PC-9 (cell line): ENCODE measurements at regions of chr20 and their contacts with region 1.

Region 1: GRCh38 chr20:38173237-38174156 is 8.4 kb upstream of the TGM2 start:
- DNase-seq: peak; percentile 81 to 91
- H3K4me3 ChIP-seq: no peak overlapping the region
- H3K27ac ChIP-seq: peak overlapping the region; percentile 78
- H3K4me1 ChIP-seq: peaks cover 53% of the 10 kb centered on the region
- H3K27me3 ChIP-seq: no peaks in the 10 kb centered on the region
- CTCF ChIP-seq: peak; percentile 41; the same call in 1 of the 2 replicates

Region 2: GRCh38 chr20:38187512-38187911 is 14.0 kb after region 1 on chr20:
- CTCF ChIA-PET with region 1: interaction called, 4 read pairs
- POLR2A ChIA-PET with region 1: interaction called, 3 read pairs
- intact Hi-C with region 1: loop called (anchors 1 kb)
- DNase-seq: no peak
- H3K4me3 ChIP-seq: no peak overlapping the region
- H3K27ac ChIP-seq: peak overlapping the region; percentile 86
- H3K4me1 ChIP-seq: peaks cover 64% of the 10 kb centered on the region
- H3K27me3 ChIP-seq: no peaks in the 10 kb centered on the region
- CTCF ChIP-seq: no peak

Region 3: DNA sequence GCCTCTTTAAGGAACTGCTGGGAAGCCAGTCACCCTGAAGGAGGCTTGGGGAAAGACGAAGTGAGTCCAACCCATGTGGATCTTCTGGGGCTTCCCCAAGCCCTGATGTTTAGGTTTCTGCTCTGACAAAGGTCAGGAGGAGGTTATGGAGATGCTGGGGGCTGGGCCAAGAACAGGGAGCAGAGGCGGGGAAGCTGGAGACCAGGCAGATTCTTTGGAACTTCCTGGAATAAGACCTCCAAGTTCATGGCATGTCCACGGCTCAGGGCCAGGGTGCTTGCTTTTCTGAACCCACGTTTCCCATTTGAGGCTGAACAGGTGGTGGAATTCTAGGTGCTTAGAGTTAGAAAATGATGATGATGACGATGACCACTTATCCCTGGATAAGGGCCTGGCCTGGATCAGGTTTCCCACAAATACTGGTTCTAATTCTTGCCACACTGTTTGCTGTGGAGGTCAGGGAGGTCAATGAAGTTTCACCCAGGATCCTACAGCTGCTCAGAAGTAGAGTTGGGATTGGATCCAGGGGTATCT is 21.5 kb after region 1 on chr20:
- CTCF ChIA-PET with region 1: interaction called, 3 read pairs
- POLR2A ChIA-PET with region 1: interaction called, 3 read pairs
- intact Hi-C with region 1: loop called (anchors 1 kb)
- DNase-seq: peak in 1 of 2 experiments; percentile 72
- H3K4me3 ChIP-seq: no peak overlapping the region
- H3K27ac ChIP-seq: peak overlapping the region; percentile 73
- H3K4me1 ChIP-seq: peaks cover 58% of the 10 kb centered on the region
- H3K27me3 ChIP-seq: no peaks in the 10 kb centered on the region
- CTCF ChIP-seq: no peak